ENCODE measurements at regions of chr22 and their contacts with region 1.

Region 1: GRCh38 chr22:43346521-43346929 is 3.4 kb upstream of the SCUBE1 start:
- DNase-seq: peak; percentile 69 to 81
- ATAC-seq: peak; percentile 57 to 70 (median 68)
- H3K4me3 ChIP-seq: no peak overlapping the region
- H3K4me3 Mint-ChIP-seq: no peak overlapping the region
- H3K27ac ChIP-seq: no peak overlapping the region
- H3K27ac Mint-ChIP-seq: no peak overlapping the region
- H3K4me1 ChIP-seq: peaks cover 10% of the 10 kb centered on the region
- H3K4me1 Mint-ChIP-seq: peaks cover 4 to 27% of the 10 kb centered on the region in 2 donors
- H3K27me3 ChIP-seq: peaks cover 27% of the 10 kb centered on the region
- H3K27me3 Mint-ChIP-seq: peaks cover 55 to 62% of the 10 kb centered on the region in 2 donors
- CTCF ChIP-seq: peak; percentile 89

Region 2: GRCh38 chr22:43230971-43231723 is 115.4 kb before region 1 on chr22:
- intact Hi-C with region 1: loop called (anchors 1 kb)
- DNase-seq: peak; percentile 70 to 83
- ATAC-seq: peak; percentile 65 to 96 (median 90)
- H3K4me3 ChIP-seq: no peak overlapping the region
- H3K4me3 Mint-ChIP-seq: no peak overlapping the region
- H3K27ac ChIP-seq: no peak overlapping the region
- H3K27ac Mint-ChIP-seq: peak overlapping the region in 1 of 2 donors; percentile 44
- H3K4me1 ChIP-seq: peaks cover 7% of the 10 kb centered on the region
- H3K4me1 Mint-ChIP-seq: peaks cover 0 to 8% of the 10 kb centered on the region in 2 donors
- H3K27me3 ChIP-seq: no peaks in the 10 kb centered on the region
- H3K27me3 Mint-ChIP-seq: peaks cover 14 to 15% of the 10 kb centered on the region in 2 donors
- CTCF ChIP-seq: peak; percentile 99

Measured in natural killer cell (primary cell).